Gastrocnemius medialis (tissue), 4 donors: ENCODE measurements at regions of chr2 and their contacts with region 1.

Region 1: DNA sequence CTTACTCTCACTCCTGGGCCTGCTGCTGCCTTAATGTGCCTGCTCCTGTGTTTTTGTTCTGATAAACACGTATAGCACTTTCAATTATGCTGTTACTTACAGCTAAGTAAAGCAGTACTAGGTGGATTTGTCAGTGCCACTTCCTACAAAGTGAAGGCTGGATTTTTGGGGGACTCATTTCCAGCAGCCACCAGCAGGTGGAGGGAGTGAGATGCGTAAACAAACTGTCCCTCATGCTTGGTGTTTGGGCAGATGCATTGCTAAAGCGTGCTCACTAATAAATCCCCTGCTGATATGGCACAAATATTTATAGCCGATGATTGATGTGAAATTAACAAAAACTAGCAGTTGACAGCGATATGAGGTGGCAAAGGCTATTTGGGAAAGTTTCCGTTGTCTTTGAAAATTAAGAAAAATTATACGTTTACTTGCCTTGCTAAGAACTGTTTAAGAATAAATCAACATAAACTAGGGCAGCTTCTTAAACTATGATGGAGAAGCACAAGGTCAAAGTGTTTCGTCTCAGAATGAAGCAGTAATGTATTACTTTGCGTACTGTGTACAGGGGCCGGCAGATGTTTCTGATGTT is 101.7 kb downstream of the AGAP1 start:
- DNase-seq: peak; percentile 21 to 60
- ATAC-seq: peak; percentile 54 to 67
- H3K4me3 ChIP-seq: no peak overlapping the region
- H3K27ac ChIP-seq: no peak overlapping the region
- H3K4me1 ChIP-seq: peaks cover 0 to 5% of the 10 kb centered on the region in 2 donors
- H3K27me3 ChIP-seq: no peaks in the 10 kb centered on the region
- CTCF ChIP-seq: peak; percentile 79 to 85 (median 83)
- POLR2A ChIP-seq: no peak

Region 2: DNA sequence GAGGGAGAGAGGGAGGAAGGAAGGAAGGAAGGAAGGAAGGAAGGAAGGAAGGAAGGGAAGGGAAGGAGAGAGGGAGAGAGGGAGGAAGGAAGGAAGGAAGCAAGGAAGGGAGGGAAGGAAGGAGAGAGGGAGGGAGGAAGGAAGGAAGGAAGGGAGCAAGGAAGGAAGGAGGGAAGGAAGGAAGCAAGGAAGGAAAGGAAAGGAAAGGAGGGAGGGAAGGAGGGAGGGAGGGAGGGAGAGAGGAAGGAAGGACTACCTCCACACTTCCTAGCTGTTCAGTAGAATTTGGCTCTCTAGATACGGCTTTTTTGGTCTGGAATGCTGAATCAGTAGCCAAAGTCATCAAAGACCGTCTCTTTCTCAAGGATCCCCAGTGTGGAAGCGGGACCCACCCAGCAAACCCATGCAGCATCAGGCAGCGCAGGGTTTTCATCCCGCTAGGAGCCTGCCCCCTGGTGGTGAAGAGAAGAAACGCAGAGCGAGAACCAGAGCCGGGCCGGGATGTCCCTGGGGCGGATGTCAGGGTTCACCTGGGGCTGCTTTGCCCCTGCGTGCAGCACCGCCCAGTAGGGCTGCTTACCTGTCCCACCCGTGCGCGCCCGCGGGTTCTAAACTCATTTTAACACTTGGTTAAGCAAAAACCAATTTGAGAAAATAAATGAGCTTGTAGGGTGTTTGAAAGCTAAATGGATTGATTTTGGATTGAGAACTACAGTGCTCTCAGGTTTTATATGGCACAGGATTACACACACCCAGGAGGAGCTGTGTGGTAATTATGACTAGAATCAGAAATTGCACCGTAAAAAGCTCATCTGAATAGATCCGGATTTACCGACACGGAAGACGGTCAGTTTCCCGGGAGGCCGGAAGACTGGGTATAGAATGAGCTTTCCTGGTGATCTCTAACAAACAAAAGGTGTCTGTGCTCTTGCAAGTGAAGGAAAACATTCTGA is 1050.6 kb before region 1 on chr2:
- in situ Hi-C with region 1: loop called in 2 of 4 experiments (anchors 25 kb)
- intact Hi-C with region 1: no loop called
- DNase-seq: peak in 1 of 2 donors; percentile 30
- ATAC-seq: peak in 1 of 2 donors; percentile 75
- H3K4me3 ChIP-seq: no peak overlapping the region
- H3K27ac ChIP-seq: no peak overlapping the region
- H3K4me1 ChIP-seq: no peaks in the 10 kb centered on the region
- H3K27me3 ChIP-seq: peaks cover 0 to 2% (median 0%) of the 10 kb centered on the region in 3 donors
- CTCF ChIP-seq: peak; percentile 44 to 89 (median 78)
- POLR2A ChIP-seq: no peak

Region 3: GRCh38 chr2:235135990-235136561 is 459.4 kb before region 1 on chr2:
- in situ Hi-C with region 1: loop called in 3 of 4 experiments (anchors 5 to 25 kb)
- intact Hi-C with region 1: loop called (anchors 2 kb)
- DNase-seq: peak; percentile 32 to 40
- ATAC-seq: peak; percentile 51 to 68
- H3K4me3 ChIP-seq: no peak overlapping the region
- H3K27ac ChIP-seq: no peak overlapping the region
- H3K4me1 ChIP-seq: no peaks in the 10 kb centered on the region
- H3K27me3 ChIP-seq: no peaks in the 10 kb centered on the region
- CTCF ChIP-seq: peak; percentile 20 to 65 (median 52)
- POLR2A ChIP-seq: no peak

Region 4: GRCh38 chr2:235493775-235494715 is 101.5 kb before region 1 on chr2 and contains the start of gene AGAP1:
- in situ Hi-C with region 1: no loop called
- intact Hi-C with region 1: loop called (anchors 5 kb)
- DNase-seq: peak; percentile 76 to 86
- ATAC-seq: peak; percentile 85 to 91
- H3K4me3 ChIP-seq: peak within 1 kb of the TSS; percentile 64 to 76 (median 70)
- H3K27ac ChIP-seq: peak within 1 kb of the TSS; percentile 73 to 86 (median 78)
- H3K4me1 ChIP-seq: peaks cover 11 to 30% of the 10 kb centered on the region in 2 donors
- H3K27me3 ChIP-seq: no peaks in the 10 kb centered on the region
- CTCF ChIP-seq: no peak
- POLR2A ChIP-seq: peak; percentile 36 to 37
- total RNA-seq, gene AGAP1: 8.5 to 26.8 (median 14.4) TPM

Region 5: GRCh38 chr2:235563051-235563910 is 32.2 kb before region 1 on chr2:
- in situ Hi-C with region 1: no loop called
- intact Hi-C with region 1: no loop called
- DNase-seq: no peak
- ATAC-seq: no peak
- H3K4me3 ChIP-seq: no peak overlapping the region
- H3K27ac ChIP-seq: no peak overlapping the region
- H3K4me1 ChIP-seq: peaks cover 21 to 23% of the 10 kb centered on the region in 2 donors
- H3K27me3 ChIP-seq: no peaks in the 10 kb centered on the region
- CTCF ChIP-seq: no peak
- POLR2A ChIP-seq: no peak

Region 6: DNA sequence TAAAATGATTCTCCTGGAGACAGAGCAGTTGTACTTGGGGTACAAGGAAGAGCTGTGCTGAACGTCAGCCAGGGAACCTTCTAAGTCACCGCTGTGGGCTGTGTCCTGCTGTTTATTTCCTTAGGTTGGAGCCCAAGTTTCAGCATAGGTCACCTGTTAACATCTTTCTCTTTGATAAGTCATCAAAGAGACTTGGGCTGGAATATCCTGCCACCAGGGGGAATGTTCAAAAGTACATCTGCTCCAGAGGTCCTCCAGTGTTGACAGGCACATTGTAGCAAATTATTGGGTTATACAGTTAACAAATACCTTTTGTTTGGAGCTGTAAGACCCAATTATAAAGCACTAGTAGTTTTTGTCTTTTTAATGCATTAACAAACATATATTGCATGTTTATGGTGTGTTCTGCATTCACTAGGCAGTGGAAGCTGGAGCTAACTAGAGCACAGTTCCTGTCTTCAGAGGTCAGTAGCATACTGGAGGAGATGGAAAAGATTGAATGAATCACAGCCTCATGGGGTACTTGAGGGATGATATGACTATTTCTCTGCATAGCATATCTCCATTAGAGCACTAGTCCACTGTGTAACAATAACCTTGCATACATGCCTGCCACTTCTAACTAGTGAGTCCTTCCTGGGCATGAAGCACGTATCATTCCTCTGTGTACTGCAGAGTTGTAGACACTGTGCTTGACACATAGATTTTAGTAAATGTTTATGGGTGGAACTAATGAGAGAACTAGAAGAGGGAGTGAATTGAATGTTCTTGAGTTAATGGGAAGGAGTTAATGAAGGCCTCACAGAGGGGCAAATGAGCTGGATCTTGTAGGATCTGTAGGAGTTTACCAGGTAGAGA is 80.4 kb after region 1 on chr2:
- in situ Hi-C with region 1: loop called in 1 of 4 experiments (anchors 5 kb)
- intact Hi-C with region 1: no loop called
- DNase-seq: no peak
- ATAC-seq: no peak
- H3K4me3 ChIP-seq: no peak overlapping the region
- H3K27ac ChIP-seq: no peak overlapping the region
- H3K4me1 ChIP-seq: peaks cover 4 to 12% of the 10 kb centered on the region in 2 donors
- H3K27me3 ChIP-seq: no peaks in the 10 kb centered on the region
- CTCF ChIP-seq: no peak
- POLR2A ChIP-seq: no peak

Region 7: GRCh38 chr2:235746257-235747084 is 151.0 kb after region 1 on chr2:
- in situ Hi-C with region 1: loop called (anchors 5 to 10 kb)
- intact Hi-C with region 1: loop called (anchors 1 kb)
- DNase-seq: peak; percentile 23 to 62
- ATAC-seq: peak; percentile 90 to 92
- H3K4me3 ChIP-seq: no peak overlapping the region
- H3K27ac ChIP-seq: no peak overlapping the region
- H3K4me1 ChIP-seq: peaks cover 3 to 11% of the 10 kb centered on the region in 2 donors
- H3K27me3 ChIP-seq: no peaks in the 10 kb centered on the region
- CTCF ChIP-seq: peak; percentile 76 to 87 (median 83)
- POLR2A ChIP-seq: no peak